ENCODE measurements at regions of chr20 and their contacts with region 1.

Region 1: DNA sequence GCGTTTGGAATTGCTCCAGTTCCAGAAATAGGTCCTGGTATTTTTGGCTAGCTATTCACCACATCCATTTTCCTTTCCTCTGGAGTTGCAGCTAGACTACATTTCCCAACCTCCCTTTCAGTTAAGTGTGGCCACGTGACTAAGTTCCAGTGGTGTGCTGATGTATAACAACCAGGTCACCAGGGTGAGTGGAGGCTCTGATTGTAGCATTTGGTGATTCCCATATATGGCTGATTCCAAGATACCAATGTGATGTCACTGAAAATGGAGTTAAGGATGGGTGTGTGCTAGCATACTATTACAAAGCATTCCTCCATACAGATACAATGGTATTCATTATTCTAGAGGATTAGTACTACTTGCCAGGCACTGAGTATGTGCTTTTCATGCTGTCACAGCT is 49.7 kb upstream of the STK35 start:
- DNase-seq: no peak
- ATAC-seq: no peak
- H3K4me3 ChIP-seq: no peak overlapping the region
- H3K4me3 Mint-ChIP-seq: no peak overlapping the region
- H3K27ac ChIP-seq: no peak overlapping the region
- H3K27ac Mint-ChIP-seq: no peak overlapping the region
- H3K4me1 ChIP-seq: no peaks in the 10 kb centered on the region
- H3K4me1 Mint-ChIP-seq: no peaks in the 10 kb centered on the region
- H3K27me3 ChIP-seq: no peaks in the 10 kb centered on the region
- H3K27me3 Mint-ChIP-seq: peaks cover 16 to 18% of the 10 kb centered on the region in 2 donors
- CTCF ChIP-seq: no peak

Region 2: GRCh38 chr20:2037296-2037914 is 14.5 kb before region 1 on chr20:
- intact Hi-C with region 1: loop called (anchors 1 kb)
- DNase-seq: no peak
- ATAC-seq: no peak
- H3K4me3 ChIP-seq: no peak overlapping the region
- H3K4me3 Mint-ChIP-seq: no peak overlapping the region
- H3K27ac ChIP-seq: no peak overlapping the region
- H3K27ac Mint-ChIP-seq: no peak overlapping the region
- H3K4me1 ChIP-seq: no peaks in the 10 kb centered on the region
- H3K4me1 Mint-ChIP-seq: no peaks in the 10 kb centered on the region
- H3K27me3 ChIP-seq: peaks cover 2% of the 10 kb centered on the region
- H3K27me3 Mint-ChIP-seq: peaks cover 16 to 20% of the 10 kb centered on the region in 2 donors
- CTCF ChIP-seq: no peak